Activated CD4-positive, alpha-beta T cell treated with anti-CD3 and anti-CD28 coated beads, Interleukin-2, amount 10 ng/mL, durations not matched to agents 24 days and 14 days (primary cell): ENCODE measurements at regions of chr13 and their contacts with region 1.

Region 1: DNA sequence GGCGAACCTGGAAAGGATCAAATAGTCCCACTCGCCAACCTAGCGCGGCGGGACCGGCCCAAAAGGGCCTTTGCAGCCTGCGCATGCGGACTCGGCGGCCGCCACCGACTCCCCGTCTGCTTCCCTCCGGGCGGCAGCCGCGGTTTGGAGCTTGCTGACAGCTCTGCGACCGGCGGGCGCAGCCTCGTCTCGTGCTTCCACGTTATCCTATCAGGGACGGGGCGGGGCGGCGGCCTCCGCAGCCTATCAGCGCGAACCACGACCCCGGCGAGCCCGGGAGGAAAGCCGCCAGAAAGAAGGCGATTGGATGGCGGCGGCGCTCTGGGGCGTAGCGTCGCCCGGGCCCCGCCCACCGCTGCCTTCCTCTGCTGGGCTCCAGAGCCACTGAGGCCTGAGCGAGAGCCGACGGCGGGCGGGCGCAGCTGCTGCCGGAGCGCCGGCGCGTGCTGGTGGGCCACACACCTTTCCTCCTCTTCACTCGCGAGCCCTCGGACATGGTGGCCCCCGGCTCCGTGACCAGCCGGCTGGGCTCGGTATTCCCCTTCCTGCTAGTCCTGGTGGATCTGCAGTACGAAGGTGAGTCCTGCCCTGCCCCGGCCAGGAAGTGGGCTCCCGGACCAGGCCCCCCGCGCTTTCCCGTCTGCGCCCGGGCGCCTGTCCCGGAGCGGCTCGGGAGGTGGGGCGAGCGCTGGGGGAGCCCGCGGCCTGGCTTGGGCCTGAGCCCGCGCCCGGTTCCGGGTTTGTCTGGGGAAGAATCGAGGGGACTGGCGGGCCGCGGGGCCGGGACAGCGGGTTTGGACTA is at the start of gene DNAJC3:
- DNase-seq: peak; percentile 100
- H3K4me3 Mint-ChIP-seq: peak within 1 kb of the TSS; percentile 93
- H3K27ac Mint-ChIP-seq: peak within 1 kb of the TSS; percentile 93
- H3K4me1 Mint-ChIP-seq: peaks cover 43% of the 10 kb centered on the region
- H3K27me3 Mint-ChIP-seq: no peaks in the 10 kb centered on the region
- total RNA-seq, gene DNAJC3: 25.2 and 25.6 TPM in 2 replicates

Region 2: GRCh38 chr13:94921181-94921580 is 755.8 kb before region 1 on chr13:
- intact Hi-C with region 1: no loop called
- DNase-seq: no peak
- H3K4me3 Mint-ChIP-seq: no peak overlapping the region
- H3K27ac Mint-ChIP-seq: no peak overlapping the region
- H3K4me1 Mint-ChIP-seq: no peaks in the 10 kb centered on the region
- H3K27me3 Mint-ChIP-seq: no peaks in the 10 kb centered on the region

Region 3: DNA sequence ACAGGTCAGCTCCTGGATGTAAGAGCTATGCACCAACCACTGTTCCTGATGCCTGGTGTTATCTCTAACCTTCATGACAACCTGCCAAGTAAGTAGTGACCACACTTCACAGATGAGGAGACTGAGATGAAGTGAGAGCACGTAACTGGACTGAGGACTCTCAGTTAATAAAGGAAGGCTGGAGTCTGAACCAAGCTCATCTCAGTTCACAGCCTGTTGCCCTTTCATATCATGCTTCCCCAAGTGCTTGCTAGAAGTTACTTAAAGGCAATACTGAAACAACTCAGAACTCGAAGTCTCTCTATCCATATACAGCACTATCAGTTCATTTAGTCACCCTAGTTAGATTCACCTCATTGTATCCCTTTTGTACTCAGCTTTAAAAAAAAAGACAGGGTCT is 495.4 kb before region 1 on chr13:
- intact Hi-C with region 1: loop called (anchors 5 kb)
- DNase-seq: no peak
- H3K4me3 Mint-ChIP-seq: no peak overlapping the region
- H3K27ac Mint-ChIP-seq: no peak overlapping the region
- H3K4me1 Mint-ChIP-seq: peaks cover 43% of the 10 kb centered on the region
- H3K27me3 Mint-ChIP-seq: no peaks in the 10 kb centered on the region

Region 4: DNA sequence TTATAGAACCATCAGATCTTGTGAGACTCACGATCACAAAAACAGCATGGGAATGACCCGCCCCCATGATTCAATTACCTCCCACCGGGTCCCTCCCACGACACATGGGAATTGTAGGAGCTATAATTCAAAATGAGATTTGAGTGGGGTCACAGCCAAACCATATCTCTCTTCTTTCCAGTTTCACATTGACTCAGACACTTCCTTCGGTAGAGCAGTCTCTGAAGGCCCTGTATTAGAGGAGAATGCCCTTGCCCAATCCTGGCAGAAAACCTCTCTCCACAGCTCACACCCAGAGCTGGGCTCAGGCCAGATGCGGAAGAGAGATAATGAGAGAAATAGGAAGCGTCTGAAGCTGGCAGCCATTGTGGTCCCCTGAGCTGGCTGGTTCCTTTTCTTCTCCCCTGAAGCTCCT is 196.8 kb before region 1 on chr13:
- intact Hi-C with region 1: loop called (anchors 5 kb)
- DNase-seq: peak; percentile 58
- H3K4me3 Mint-ChIP-seq: peak overlapping the region; percentile 29
- H3K27ac Mint-ChIP-seq: peak overlapping the region; percentile 58
- H3K4me1 Mint-ChIP-seq: peaks cover 13% of the 10 kb centered on the region
- H3K27me3 Mint-ChIP-seq: peaks cover 7% of the 10 kb centered on the region

Region 5: GRCh38 chr13:95689582-95689926 is 12.6 kb after region 1 on chr13:
- intact Hi-C with region 1: loop called (anchors 1 kb)
- DNase-seq: no peak
- H3K4me3 Mint-ChIP-seq: peak overlapping the region; percentile 16
- H3K27ac Mint-ChIP-seq: peak overlapping the region; percentile 59
- H3K4me1 Mint-ChIP-seq: peaks cover 28% of the 10 kb centered on the region
- H3K27me3 Mint-ChIP-seq: no peaks in the 10 kb centered on the region

Region 6: DNA sequence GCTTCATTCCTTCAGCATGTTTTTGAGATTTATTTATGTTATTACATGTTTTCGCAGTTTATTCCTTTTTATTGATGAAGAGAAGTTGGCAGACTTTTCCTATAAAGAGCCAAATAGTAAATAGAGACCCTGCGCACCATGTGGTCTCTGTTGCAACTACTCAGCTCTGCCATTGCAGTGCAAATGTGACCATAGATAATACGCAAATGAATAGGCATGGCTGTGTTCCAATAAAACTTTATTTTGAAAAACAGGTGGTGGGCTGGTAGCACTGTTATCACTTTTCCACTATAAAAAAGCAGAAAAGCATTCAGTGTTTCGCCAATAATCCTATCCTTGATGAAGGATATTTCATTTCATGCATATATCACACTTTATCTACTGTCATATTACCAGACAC is 94.9 kb after region 1 on chr13:
- intact Hi-C with region 1: loop called (anchors 10 kb)
- DNase-seq: no peak
- H3K4me3 Mint-ChIP-seq: no peak overlapping the region
- H3K27ac Mint-ChIP-seq: no peak overlapping the region
- H3K4me1 Mint-ChIP-seq: peaks cover 9% of the 10 kb centered on the region
- H3K27me3 Mint-ChIP-seq: no peaks in the 10 kb centered on the region